Psoas muscle (tissue), 8 donors: ENCODE measurements at regions of chr6 and their contacts with region 1.

Region 1: DNA sequence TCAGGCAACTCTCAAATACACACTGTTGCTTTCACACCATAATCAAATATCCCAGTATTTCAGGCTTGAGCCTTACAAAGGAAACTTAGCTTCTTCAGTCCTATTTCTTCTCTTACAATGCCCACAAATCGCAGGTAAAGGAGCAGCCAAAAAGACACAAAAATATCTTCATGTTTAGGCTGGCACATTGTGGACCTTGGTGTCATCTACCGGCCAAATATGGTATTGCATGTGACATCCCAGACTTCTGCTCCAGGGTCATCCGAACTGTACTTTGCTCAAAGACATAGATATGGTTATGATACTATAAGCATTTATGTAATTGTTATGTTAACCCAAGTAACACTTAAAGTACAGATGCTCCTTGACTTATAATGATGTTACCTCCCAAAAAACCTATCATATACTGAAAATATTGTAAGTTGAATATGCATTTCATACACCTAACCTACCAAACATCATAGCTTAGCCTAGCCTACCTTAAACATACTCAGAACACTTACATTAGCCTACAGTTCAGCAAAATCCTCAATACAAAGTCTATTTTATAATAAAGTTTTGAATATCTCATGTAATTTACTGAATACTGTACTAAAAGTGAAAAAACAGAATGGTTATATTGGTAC is 4.6 kb downstream of the OR2H2 start:
- DNase-seq: no peak
- ATAC-seq: peak in 1 of 4 donors; percentile 66
- H3K4me3 ChIP-seq: no peak overlapping the region
- H3K27ac ChIP-seq: no peak overlapping the region
- H3K4me1 ChIP-seq: no peaks in the 10 kb centered on the region
- H3K27me3 ChIP-seq: peaks cover 0 to 9% (median 3%) of the 10 kb centered on the region in 3 donors
- CTCF ChIP-seq: peak; percentile 94

Region 2: DNA sequence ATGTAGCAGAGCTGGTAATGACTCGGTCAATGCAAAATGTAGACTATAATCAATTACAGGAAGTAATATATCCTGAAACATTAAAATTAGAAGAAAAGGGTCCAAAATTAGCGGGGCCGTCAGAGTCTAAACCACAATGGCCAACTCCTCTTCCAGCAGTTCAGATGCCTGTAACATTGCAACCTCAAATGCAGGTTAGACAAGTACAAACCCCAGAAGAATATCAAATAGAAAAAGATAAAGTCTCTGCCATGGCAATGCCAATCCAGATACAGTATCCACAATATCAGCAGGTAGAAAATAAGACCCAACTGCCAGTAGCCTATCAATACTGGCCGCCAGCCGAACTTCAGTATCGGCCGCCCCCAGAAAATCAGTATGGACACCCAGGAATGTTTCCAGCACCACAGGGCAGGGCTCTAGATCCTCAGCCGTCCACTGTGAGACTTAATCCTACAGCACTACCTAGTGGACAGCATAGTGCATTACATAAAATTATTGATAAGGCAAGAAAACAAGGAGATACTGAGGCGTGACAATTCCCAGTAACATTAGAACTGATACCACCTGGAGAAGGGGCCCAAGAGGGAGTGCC is 905.5 kb before region 1 on chr6:
- intact Hi-C with region 1: loop called (anchors 5 kb)
- DNase-seq: no peak
- ATAC-seq: no peak
- H3K4me3 ChIP-seq: no peak overlapping the region
- H3K27ac ChIP-seq: no peak overlapping the region
- H3K4me1 ChIP-seq: no peaks in the 10 kb centered on the region
- H3K27me3 ChIP-seq: peaks cover 2 to 42% (median 3%) of the 10 kb centered on the region in 3 donors
- CTCF ChIP-seq: peak; percentile 34

Region 3: GRCh38 chr6:29016559-29017427 is 572.7 kb before region 1 on chr6:
- intact Hi-C with region 1: loop called in 1 of 2 experiments (anchors 5 kb)
- DNase-seq: peak; percentile 71 to 80
- ATAC-seq: peak; percentile 78 to 97 (median 82)
- H3K4me3 ChIP-seq: peak overlapping the region; percentile 65
- H3K27ac ChIP-seq: no peak overlapping the region
- H3K4me1 ChIP-seq: no peaks in the 10 kb centered on the region
- H3K27me3 ChIP-seq: peaks cover 0 to 50% (median 15%) of the 10 kb centered on the region in 3 donors
- CTCF ChIP-seq: peak; percentile 80